ENCODE measurements at regions of chr5 and their contacts with region 1.

Region 1: DNA sequence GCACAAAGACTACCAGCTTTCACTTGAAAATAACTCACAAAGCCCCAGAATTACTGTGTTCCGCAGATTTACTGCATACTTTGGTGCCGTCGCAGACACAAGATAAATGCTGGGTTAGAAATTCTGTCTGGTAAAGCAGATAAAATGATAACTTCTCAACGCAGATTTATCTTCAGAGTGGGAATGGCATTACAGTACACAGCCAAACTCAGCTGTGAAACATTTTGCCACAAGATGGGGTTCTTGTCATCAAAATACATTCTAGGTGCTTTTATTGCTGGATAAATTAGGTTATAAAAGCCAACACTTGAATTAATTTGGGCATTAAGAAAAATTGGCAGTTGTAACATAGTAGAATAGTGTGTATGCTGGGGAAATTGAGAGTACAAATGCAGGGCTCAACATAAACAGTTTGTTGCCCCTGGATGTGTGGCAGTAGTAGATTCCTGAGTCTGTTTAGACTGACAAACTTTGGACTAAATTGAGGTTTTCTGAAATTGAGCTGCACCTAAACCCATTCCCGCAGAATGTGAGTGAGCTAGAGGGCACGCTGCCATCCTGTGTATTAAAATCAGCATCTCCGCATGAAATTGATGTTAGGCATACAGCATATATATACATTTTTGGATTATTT is 61.1 kb downstream of the LMNB1 start:
- DNase-seq: no peak
- ATAC-seq: peak in 2 of 4 donors; percentile 54 to 55
- H3K4me3 ChIP-seq: no peak overlapping the region
- H3K27ac ChIP-seq: no peak overlapping the region
- H3K4me1 ChIP-seq: no peaks in the 10 kb centered on the region
- H3K27me3 ChIP-seq: no peaks in the 10 kb centered on the region
- CTCF ChIP-seq: peak; percentile 31 to 76 (median 58)
- POLR2A ChIP-seq: no peak

Region 2: DNA sequence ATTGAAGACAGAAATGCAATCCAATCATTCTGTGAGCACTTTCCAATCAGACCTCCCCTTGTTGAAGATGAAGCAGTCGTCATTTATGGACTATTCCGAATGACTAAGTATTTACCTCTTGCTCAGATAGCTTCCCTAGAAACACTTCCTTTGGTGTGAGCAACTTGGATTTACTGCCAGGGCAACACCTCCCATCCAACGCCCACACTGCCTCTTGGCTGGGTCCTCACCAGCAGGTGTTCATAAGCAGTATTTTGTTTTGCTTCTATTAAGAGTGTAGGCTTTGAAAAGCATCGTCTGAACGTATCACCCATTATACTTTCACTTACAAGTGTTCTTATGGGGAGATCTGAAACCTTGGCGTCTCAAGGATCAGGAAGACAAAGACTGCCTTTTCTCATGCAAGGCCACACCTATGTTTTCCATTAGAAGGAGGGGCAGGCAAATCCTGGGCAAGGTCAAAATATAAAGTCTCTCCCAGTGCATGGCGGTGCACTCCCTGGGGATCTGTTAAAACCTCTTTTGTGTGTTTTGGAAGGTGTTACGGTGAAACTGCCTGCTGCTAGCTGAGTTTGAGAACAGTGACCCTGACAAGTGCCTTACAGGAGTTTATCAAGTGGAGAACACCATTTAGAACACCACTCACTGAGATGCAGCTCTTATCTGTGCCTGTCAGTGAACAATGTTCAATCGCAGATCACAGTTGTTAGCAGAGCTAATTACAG is 202.9 kb after region 1 on chr5:
- intact Hi-C with region 1: loop called in 4 of 10 experiments (anchors 2 to 10 kb)
- DNase-seq: peak in 1 of 5 donors; percentile 26
- ATAC-seq: peak; percentile 44 to 68 (median 62)
- H3K4me3 ChIP-seq: peak overlapping the region in 4 of 12 donors; percentile 0 to 7 (median 2)
- H3K27ac ChIP-seq: peak overlapping the region in 11 of 12 donors; percentile 24 to 70 (median 40)
- H3K4me1 ChIP-seq: peaks cover 0 to 34% (median 22%) of the 10 kb centered on the region in 12 donors
- H3K27me3 ChIP-seq: no peaks in the 10 kb centered on the region
- CTCF ChIP-seq: no peak
- POLR2A ChIP-seq: no peak

Region 3: GRCh38 chr5:127313847-127314473 is 475.9 kb after region 1 on chr5:
- intact Hi-C with region 1: loop called (anchors 2 to 5 kb)
- DNase-seq: peak; percentile 34 to 64 (median 48)
- ATAC-seq: peak in 3 of 4 donors; percentile 64 to 68 (median 66)
- H3K4me3 ChIP-seq: no peak overlapping the region
- H3K27ac ChIP-seq: no peak overlapping the region
- H3K4me1 ChIP-seq: no peaks in the 10 kb centered on the region
- H3K27me3 ChIP-seq: no peaks in the 10 kb centered on the region
- CTCF ChIP-seq: peak; percentile 68 to 86 (median 78)
- POLR2A ChIP-seq: no peak

Region 4: GRCh38 chr5:127441799-127442484 is 603.9 kb after region 1 on chr5:
- intact Hi-C with region 1: no loop called
- DNase-seq: no peak
- ATAC-seq: no peak
- H3K4me3 ChIP-seq: no peak overlapping the region
- H3K27ac ChIP-seq: no peak overlapping the region
- H3K4me1 ChIP-seq: no peaks in the 10 kb centered on the region
- H3K27me3 ChIP-seq: peaks cover 0 to 5% (median 0%) of the 10 kb centered on the region in 9 donors
- CTCF ChIP-seq: peak in 8 of 12 donors; percentile 15 to 40 (median 32)
- POLR2A ChIP-seq: no peak

Region 5: GRCh38 chr5:127486471-127486870 is 648.4 kb after region 1 on chr5:
- intact Hi-C with region 1: loop called in 2 of 10 experiments (anchors 5 to 10 kb)
- DNase-seq: no peak
- ATAC-seq: no peak
- H3K4me3 ChIP-seq: no peak overlapping the region
- H3K27ac ChIP-seq: no peak overlapping the region
- H3K4me1 ChIP-seq: no peaks in the 10 kb centered on the region
- H3K27me3 ChIP-seq: peaks cover 0 to 17% (median 0%) of the 10 kb centered on the region in 9 donors
- CTCF ChIP-seq: no peak
- POLR2A ChIP-seq: no peak

Region 6: GRCh38 chr5:127492854-127493738 is 655.1 kb after region 1 on chr5:
- intact Hi-C with region 1: loop called in 3 of 10 experiments (anchors 5 to 10 kb)
- DNase-seq: no peak
- ATAC-seq: no peak
- H3K4me3 ChIP-seq: no peak overlapping the region
- H3K27ac ChIP-seq: no peak overlapping the region
- H3K4me1 ChIP-seq: no peaks in the 10 kb centered on the region
- H3K27me3 ChIP-seq: peaks cover 0 to 14% (median 0%) of the 10 kb centered on the region in 9 donors
- CTCF ChIP-seq: peak; percentile 54 to 77 (median 68)
- POLR2A ChIP-seq: no peak

Region 7: DNA sequence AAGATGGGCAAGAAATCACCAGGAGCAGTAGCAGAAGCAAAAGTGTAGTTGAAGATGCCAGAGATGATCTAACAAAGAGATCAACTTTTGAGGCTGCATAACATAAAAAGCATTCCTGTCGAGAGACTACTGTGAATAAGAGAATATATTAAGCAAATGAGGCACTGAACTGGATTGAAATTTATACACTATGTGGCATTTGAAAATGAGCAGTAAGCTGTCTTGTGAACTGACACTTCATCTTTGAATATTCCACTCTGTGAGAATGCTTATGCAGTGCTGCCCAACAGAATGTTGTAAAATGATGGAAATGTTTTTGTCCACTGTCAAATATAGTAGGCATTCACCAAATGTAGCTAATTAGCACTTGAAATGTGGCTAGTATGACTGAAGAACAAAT is 660.5 kb after region 1 on chr5:
- intact Hi-C with region 1: loop called in 2 of 10 experiments (anchors 5 kb)
- DNase-seq: no peak
- ATAC-seq: no peak
- H3K4me3 ChIP-seq: no peak overlapping the region
- H3K27ac ChIP-seq: no peak overlapping the region
- H3K4me1 ChIP-seq: no peaks in the 10 kb centered on the region
- H3K27me3 ChIP-seq: no peaks in the 10 kb centered on the region
- CTCF ChIP-seq: no peak
- POLR2A ChIP-seq: no peak

Measured in heart left ventricle (tissue), 16 donors.